ENCODE measurements at regions of chr7 and their contacts with region 1.

Region 1: GRCh38 chr7:121547544-121548092 is 151.5 kb upstream of the FAM3C start:
- DNase-seq: no peak
- ATAC-seq: peak; percentile 89
- H3K4me3 ChIP-seq: no peak overlapping the region
- H3K27ac ChIP-seq: no peak overlapping the region
- H3K4me1 ChIP-seq: no peaks in the 10 kb centered on the region
- H3K27me3 ChIP-seq: no peaks in the 10 kb centered on the region
- CTCF ChIP-seq: peak; percentile 60 to 85 (median 64); a peak in 5 of 6 replicates
- EP300 ChIP-seq: no peak
- POLR2A ChIP-seq: no peak
- RAD21 ChIP-seq: peak; percentile 98

Region 2: GRCh38 chr7:120950539-120951308 is 596.9 kb before region 1 on chr7 and contains the start of gene ING3:
- CTCF ChIA-PET with region 1: no interaction called
- POLR2A ChIA-PET with region 1: interaction called, 5 read pairs
- RAD21 ChIA-PET with region 1: no interaction called
- SMC1A ChIA-PET with region 1: no interaction called
- in situ Hi-C with region 1: loop called (anchors 25 kb)
- intact Hi-C with region 1: no loop called
- DNase-seq: peak; percentile 92
- ATAC-seq: peak; percentile 93
- H3K4me3 ChIP-seq: peak within 1 kb of the TSS; percentile 90
- H3K27ac ChIP-seq: peak within 1 kb of the TSS; percentile 97
- H3K4me1 ChIP-seq: 0 out of 2 replicates have a peak, but pooled peaks cover 5% of the 10 kb centered on the region
- H3K27me3 ChIP-seq: no peaks in the 10 kb centered on the region
- CTCF ChIP-seq: no peak
- EP300 ChIP-seq: 0 out of 4 replicates have a peak, but pooled peaks of 1 of the 2 experiments have one; percentile 15
- POLR2A ChIP-seq: peak; percentile 89
- RAD21 ChIP-seq: no peak
- polyA plus RNA-seq, gene ING3: 44.3 to 60.8 TPM

Region 3: DNA sequence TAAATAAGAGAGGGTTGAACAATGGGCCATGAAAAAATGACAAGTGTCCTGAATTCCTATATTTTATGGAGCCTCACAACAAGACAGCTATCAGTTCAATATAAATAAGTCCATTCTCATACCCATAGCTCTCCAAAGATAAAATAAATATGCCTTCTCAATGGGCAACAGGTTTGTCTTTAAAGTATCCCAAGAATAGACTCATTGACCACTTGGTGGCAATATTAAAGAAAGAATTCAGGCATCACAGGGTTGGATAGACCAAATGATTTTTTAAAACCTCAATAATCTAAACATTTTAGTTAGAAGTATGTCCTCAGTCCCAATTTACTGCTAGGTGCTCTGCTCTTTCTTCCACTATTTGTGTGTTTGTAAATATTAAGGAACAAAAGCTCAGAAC is 383.9 kb before region 1 on chr7:
- CTCF ChIA-PET with region 1: interaction called, 7 read pairs
- POLR2A ChIA-PET with region 1: no interaction called
- RAD21 ChIA-PET with region 1: no interaction called
- SMC1A ChIA-PET with region 1: interaction called, 12 read pairs
- in situ Hi-C with region 1: no loop called
- intact Hi-C with region 1: no loop called
- DNase-seq: no peak
- ATAC-seq: peak; percentile 66
- H3K4me3 ChIP-seq: no peak overlapping the region
- H3K27ac ChIP-seq: no peak overlapping the region
- H3K4me1 ChIP-seq: no peaks in the 10 kb centered on the region
- H3K27me3 ChIP-seq: no peaks in the 10 kb centered on the region
- CTCF ChIP-seq: peak in 1 of 3 experiments; percentile 34; a peak in 1 of 6 replicates
- EP300 ChIP-seq: no peak
- POLR2A ChIP-seq: no peak
- RAD21 ChIP-seq: peak; percentile 46; the same call in 1 of the 2 replicates

Region 4: DNA sequence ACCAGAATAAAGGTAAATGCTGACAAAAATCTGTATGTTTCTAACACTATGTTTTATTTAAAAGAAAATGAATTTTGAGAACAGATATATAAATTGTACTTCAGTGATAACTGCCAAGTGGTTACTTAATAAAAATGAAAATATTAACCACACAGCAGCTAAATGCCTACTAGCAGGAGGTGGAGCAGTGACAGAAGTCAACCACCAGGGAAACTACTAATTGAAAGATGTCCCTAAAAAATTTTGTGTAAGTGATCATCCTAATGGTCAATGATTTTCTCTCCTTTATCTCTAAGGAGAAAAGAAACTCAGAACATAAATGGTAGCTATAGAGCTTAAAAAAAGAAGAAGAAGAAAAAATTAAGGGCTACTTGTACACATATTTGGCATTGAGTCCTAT is 195.9 kb before region 1 on chr7:
- CTCF ChIA-PET with region 1: interaction called, 8 read pairs
- POLR2A ChIA-PET with region 1: no interaction called
- RAD21 ChIA-PET with region 1: interaction called, 4 read pairs
- SMC1A ChIA-PET with region 1: interaction called, 15 read pairs
- in situ Hi-C with region 1: no loop called
- intact Hi-C with region 1: no loop called
- DNase-seq: no peak
- ATAC-seq: peak; percentile 52
- H3K4me3 ChIP-seq: no peak overlapping the region
- H3K27ac ChIP-seq: no peak overlapping the region
- H3K4me1 ChIP-seq: no peaks in the 10 kb centered on the region
- H3K27me3 ChIP-seq: no peaks in the 10 kb centered on the region
- CTCF ChIP-seq: no peak
- EP300 ChIP-seq: no peak
- POLR2A ChIP-seq: no peak
- RAD21 ChIP-seq: no peak

Region 5: GRCh38 chr7:121372376-121373010 is 175.1 kb before region 1 on chr7:
- CTCF ChIA-PET with region 1: interaction called, 181 read pairs
- POLR2A ChIA-PET with region 1: interaction called, 6 read pairs
- RAD21 ChIA-PET with region 1: interaction called, 119 read pairs
- SMC1A ChIA-PET with region 1: interaction called, 163 read pairs
- in situ Hi-C with region 1: loop called (anchors 5 kb)
- intact Hi-C with region 1: loop called (anchors 1 kb)
- DNase-seq: peak; percentile 73
- ATAC-seq: peak; percentile 88
- H3K4me3 ChIP-seq: no peak overlapping the region
- H3K27ac ChIP-seq: peak overlapping the region; percentile 58
- H3K4me1 ChIP-seq: peaks cover 32% of the 10 kb centered on the region
- H3K27me3 ChIP-seq: no peaks in the 10 kb centered on the region
- CTCF ChIP-seq: no peak
- EP300 ChIP-seq: peak; percentile 37 to 91; a peak in 3 of 4 replicates
- POLR2A ChIP-seq: no peak
- RAD21 ChIP-seq: 0 out of 2 replicates have a peak, but pooled peaks have one; percentile 6

Region 6: GRCh38 chr7:121537031-121537430 is 10.6 kb before region 1 on chr7:
- CTCF ChIA-PET with region 1: interaction called, 11 read pairs
- POLR2A ChIA-PET with region 1: no interaction called
- RAD21 ChIA-PET with region 1: interaction called, 3 read pairs
- SMC1A ChIA-PET with region 1: interaction called, 15 read pairs
- in situ Hi-C with region 1: no loop called
- intact Hi-C with region 1: no loop called
- DNase-seq: no peak
- ATAC-seq: no peak
- H3K4me3 ChIP-seq: no peak overlapping the region
- H3K27ac ChIP-seq: no peak overlapping the region
- H3K4me1 ChIP-seq: no peaks in the 10 kb centered on the region
- H3K27me3 ChIP-seq: no peaks in the 10 kb centered on the region
- CTCF ChIP-seq: no peak
- EP300 ChIP-seq: no peak
- POLR2A ChIP-seq: no peak
- RAD21 ChIP-seq: no peak

Region 7: GRCh38 chr7:121730869-121731268 is 183.3 kb after region 1 on chr7:
- CTCF ChIA-PET with region 1: no interaction called
- POLR2A ChIA-PET with region 1: no interaction called
- RAD21 ChIA-PET with region 1: no interaction called
- SMC1A ChIA-PET with region 1: no interaction called
- in situ Hi-C with region 1: no loop called
- intact Hi-C with region 1: no loop called
- DNase-seq: no peak
- ATAC-seq: no peak
- H3K4me3 ChIP-seq: no peak overlapping the region
- H3K27ac ChIP-seq: no peak overlapping the region
- H3K4me1 ChIP-seq: no peaks in the 10 kb centered on the region
- H3K27me3 ChIP-seq: no peaks in the 10 kb centered on the region
- CTCF ChIP-seq: no peak
- EP300 ChIP-seq: no peak
- POLR2A ChIP-seq: no peak
- RAD21 ChIP-seq: no peak

Measured in GM12878 (cell line).